Activated CD4-positive, alpha-beta memory T cell treated with anti-CD3 and anti-CD28 coated beads, Interleukin-2, amount 10 ng/mL, durations not matched to agents 7 days and 5 days (primary cell): ENCODE measurements at regions of chr18 and their contacts with region 1.

Region 1: GRCh38 chr18:2337552-2338141 is 233.7 kb downstream of the METTL4 start:
- DNase-seq: peak; percentile 43
- H3K4me3 Mint-ChIP-seq: no peak overlapping the region
- H3K27ac Mint-ChIP-seq: no peak overlapping the region
- H3K4me1 Mint-ChIP-seq: peaks cover 7% of the 10 kb centered on the region
- H3K27me3 Mint-ChIP-seq: peaks cover 10% of the 10 kb centered on the region

Region 2: GRCh38 chr18:1578505-1578904 is 759.1 kb before region 1 on chr18:
- CTCF ChIA-PET with region 1: no interaction called
- POLR2A ChIA-PET with region 1: no interaction called
- DNase-seq: no peak
- H3K4me3 Mint-ChIP-seq: no peak overlapping the region
- H3K27ac Mint-ChIP-seq: no peak overlapping the region
- H3K4me1 Mint-ChIP-seq: no peaks in the 10 kb centered on the region
- H3K27me3 Mint-ChIP-seq: no peaks in the 10 kb centered on the region

Region 3: DNA sequence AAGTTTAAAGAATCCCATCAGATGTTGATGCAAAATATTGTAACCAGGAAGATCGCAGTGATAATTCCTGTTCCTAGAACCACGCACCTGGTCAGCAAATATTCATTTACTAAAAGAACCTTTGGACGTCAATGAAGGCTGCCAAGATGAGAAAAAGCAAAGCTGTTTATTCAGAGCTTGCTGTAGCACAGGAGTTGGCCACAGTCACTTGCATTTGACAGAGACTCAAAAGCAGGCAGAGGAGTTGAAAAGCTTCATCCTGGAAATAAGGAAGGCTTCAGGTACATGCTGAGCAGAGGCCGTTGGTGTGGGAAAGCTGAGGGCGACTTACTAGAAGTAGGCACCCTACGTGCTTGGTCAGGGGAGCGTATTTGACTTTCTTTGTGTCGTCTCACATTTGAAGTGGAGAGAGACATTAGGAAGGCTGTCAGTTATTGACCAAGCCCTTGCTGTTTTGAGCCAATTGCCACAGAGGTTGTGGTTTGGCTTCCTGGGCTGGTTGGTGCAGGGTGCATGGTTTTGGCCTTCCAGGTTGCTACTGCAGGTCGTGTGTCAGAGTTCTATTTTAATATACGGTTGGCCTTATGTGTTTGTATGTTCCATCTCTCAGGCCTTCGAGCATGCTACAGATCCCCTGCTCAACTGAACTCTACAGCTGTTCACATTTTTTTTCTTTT is 56.0 kb before region 1 on chr18:
- CTCF ChIA-PET with region 1: no interaction called
- POLR2A ChIA-PET with region 1: no interaction called
- DNase-seq: no peak
- H3K4me3 Mint-ChIP-seq: no peak overlapping the region
- H3K27ac Mint-ChIP-seq: no peak overlapping the region
- H3K4me1 Mint-ChIP-seq: no peaks in the 10 kb centered on the region
- H3K27me3 Mint-ChIP-seq: no peaks in the 10 kb centered on the region

Region 4: GRCh38 chr18:2395427-2396161 is 57.9 kb after region 1 on chr18:
- CTCF ChIA-PET with region 1: no interaction called
- POLR2A ChIA-PET with region 1: no interaction called
- DNase-seq: no peak
- H3K4me3 Mint-ChIP-seq: no peak overlapping the region
- H3K27ac Mint-ChIP-seq: no peak overlapping the region
- H3K4me1 Mint-ChIP-seq: no peaks in the 10 kb centered on the region
- H3K27me3 Mint-ChIP-seq: peaks cover 11% of the 10 kb centered on the region

Region 5: GRCh38 chr18:2540575-2540974 is 202.9 kb after region 1 on chr18:
- CTCF ChIA-PET with region 1: interaction called, 12 read pairs
- POLR2A ChIA-PET with region 1: no interaction called
- DNase-seq: no peak
- H3K4me3 Mint-ChIP-seq: no peak overlapping the region
- H3K27ac Mint-ChIP-seq: no peak overlapping the region
- H3K4me1 Mint-ChIP-seq: peaks cover 2% of the 10 kb centered on the region
- H3K27me3 Mint-ChIP-seq: no peaks in the 10 kb centered on the region

Region 6: DNA sequence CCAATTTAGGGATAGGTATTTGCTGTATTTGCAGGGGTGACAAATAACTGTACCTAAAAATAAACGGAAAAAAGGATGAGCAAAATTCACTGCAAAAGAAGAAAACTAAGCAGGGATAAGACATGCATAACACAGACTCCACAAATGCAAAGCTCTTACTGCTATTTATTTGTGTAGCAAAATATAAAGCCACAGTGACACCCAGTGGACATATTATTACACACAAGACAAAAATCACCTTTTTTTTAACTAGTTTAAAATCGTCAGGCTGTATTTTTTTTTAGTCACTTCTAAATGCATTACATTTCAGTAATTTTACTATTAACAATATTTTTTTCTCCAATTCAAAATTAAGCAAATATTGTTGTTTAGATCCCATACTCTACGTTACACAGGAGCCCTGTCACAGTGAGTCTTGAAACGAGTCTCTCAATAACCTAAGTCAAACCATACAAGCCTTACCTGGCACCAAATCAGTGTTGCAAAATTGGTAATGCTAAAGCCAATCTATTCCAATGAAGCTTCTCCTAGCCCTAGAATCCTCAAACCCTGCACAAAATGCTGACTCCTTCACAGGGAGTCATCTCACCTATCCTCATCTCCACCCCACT is 209.9 kb after region 1 on chr18:
- CTCF ChIA-PET with region 1: interaction called, 12 read pairs
- POLR2A ChIA-PET with region 1: no interaction called
- DNase-seq: no peak
- H3K4me3 Mint-ChIP-seq: no peak overlapping the region
- H3K27ac Mint-ChIP-seq: no peak overlapping the region
- H3K4me1 Mint-ChIP-seq: no peaks in the 10 kb centered on the region
- H3K27me3 Mint-ChIP-seq: no peaks in the 10 kb centered on the region